ENCODE measurements at regions of chr1 and their contacts with region 1.

Region 1: DNA sequence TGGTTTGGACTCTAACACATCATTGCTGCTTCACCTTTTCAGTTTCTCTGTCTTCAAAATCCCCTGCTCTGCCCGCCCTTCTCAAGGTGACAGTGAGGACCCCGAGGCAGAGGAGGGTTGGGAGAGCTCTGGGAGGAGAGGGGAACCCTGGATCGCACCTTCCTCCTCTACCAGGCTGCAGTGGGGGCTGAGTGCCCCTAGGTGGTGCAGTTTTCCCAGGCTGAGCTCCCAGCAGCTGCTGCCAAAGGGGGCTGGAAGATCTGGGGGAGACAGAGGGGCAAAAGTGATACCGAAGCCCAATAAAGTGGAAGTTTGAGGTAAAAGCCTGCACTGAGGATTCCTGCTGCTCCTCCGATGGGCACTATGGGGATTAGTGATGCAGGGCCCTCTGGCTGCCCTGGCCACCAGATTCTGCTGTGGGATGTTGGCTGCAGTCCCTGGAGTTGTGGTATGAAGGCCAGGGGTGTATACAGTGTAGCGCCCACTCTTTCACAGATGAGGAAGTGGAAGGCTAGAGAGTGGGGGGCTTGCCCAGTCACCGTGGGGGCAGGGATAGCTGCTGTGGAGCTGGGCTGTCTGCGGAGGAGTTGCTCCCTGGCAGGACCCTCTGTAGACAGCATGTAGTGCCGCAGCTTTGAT is 40.7 kb upstream of the SCMH1 start:
- DNase-seq: peak; percentile 20
- H3K4me3 ChIP-seq: no peak overlapping the region
- H3K27ac ChIP-seq: no peak overlapping the region
- H3K27me3 ChIP-seq: peaks cover 38% of the 10 kb centered on the region
- CTCF ChIP-seq: peak; percentile 98

Region 2: DNA sequence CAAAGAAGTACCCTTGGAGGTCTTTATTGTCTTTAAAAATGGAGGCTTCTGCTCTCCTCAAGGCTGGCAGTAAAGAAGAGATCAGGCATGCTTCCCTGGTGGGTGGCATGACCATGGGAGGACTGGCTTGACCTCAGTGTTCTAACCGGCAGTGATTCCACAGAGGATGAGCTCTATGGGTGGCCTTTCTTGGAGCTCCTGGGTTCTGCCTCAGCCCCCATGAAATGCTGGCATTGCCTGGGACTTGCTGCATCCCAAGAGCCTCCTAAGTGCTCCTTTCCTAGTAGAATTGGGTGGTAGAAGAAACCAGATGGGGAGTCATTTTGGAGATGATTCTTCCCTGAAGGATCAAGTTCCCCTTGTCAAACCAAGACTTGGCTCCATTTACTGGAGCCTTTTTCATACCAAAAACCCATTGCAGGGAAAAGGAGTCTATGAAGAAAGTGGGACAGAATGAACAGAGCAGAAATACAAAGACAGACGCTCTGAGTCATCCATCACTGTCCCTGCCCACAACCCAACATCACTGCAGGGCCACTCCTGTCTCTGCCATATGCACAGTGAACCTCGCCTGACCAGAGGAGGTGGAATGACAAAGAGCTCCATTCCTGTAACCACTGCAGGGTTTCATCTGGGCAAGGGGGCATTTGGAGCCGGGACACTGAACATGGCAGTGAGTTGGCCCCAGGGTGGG is 659.7 kb before region 1 on chr1:
- in situ Hi-C with region 1: no loop called
- DNase-seq: no peak
- H3K4me3 ChIP-seq: no peak overlapping the region
- H3K27ac ChIP-seq: no peak overlapping the region
- H3K27me3 ChIP-seq: no peaks in the 10 kb centered on the region
- CTCF ChIP-seq: no peak

Region 3: GRCh38 chr1:41416552-41417334 is 133.9 kb after region 1 on chr1:
- in situ Hi-C with region 1: loop called (anchors 25 kb)
- DNase-seq: peak; percentile 51
- H3K4me3 ChIP-seq: no peak overlapping the region
- H3K27ac ChIP-seq: no peak overlapping the region
- H3K27me3 ChIP-seq: no peaks in the 10 kb centered on the region
- CTCF ChIP-seq: peak; percentile 95

Region 4: GRCh38 chr1:41529621-41530395 is 247.0 kb after region 1 on chr1:
- in situ Hi-C with region 1: no loop called
- DNase-seq: no peak
- H3K4me3 ChIP-seq: no peak overlapping the region
- H3K27ac ChIP-seq: no peak overlapping the region
- H3K27me3 ChIP-seq: no peaks in the 10 kb centered on the region
- CTCF ChIP-seq: no peak

Region 5: GRCh38 chr1:41558761-41559171 is 276.0 kb after region 1 on chr1:
- in situ Hi-C with region 1: no loop called
- DNase-seq: no peak
- H3K4me3 ChIP-seq: no peak overlapping the region
- H3K27ac ChIP-seq: no peak overlapping the region
- H3K27me3 ChIP-seq: no peaks in the 10 kb centered on the region
- CTCF ChIP-seq: no peak

Measured in brain microvascular endothelial cell (primary cell).